Common myeloid progenitor, CD34-positive (primary cell): ENCODE measurements at regions of chr4 and their contacts with region 1.

Region 1: DNA sequence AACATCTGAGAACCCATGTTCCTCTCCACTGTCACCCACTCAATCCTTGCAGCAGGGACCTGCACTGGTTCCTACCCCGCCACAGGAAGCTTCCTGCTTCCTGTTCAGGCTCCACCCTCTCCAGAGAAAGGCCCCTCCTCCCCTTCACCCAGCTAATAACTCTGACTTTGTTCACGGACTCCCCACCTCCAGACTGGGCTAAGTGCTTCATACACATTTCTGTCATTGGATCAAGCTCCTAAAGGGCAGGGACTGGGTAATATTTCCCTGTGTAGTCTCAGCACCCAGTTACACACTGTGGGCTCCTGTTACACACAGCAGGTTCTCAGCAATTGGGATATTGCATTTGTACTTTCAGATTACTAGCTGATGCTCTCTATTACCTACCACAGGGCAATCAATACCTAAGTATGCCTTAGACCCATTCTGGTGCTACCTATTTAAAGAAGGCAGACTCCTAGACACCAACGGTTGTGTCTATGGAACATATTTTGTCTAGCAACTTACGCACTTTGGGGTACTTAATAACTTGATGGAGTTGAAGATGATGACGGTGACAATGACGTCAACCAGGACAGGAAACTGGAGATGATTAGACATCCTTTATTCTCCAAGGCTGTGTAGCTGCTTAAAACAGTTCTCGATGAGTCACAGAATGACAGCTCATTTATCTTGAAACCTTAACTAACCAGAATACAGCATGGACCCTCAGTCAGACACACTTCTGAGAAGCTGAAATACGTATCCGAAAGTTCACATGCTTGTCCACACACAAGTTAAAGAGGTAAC is 58.1 kb downstream of the MAML3 start:
- DNase-seq: peak; percentile 95 to 97 (median 96)
- H3K4me3 ChIP-seq: peak overlapping the region in 5 of 7 experiments; percentile 17 to 63 (median 52)
- H3K27ac ChIP-seq: peak overlapping the region; percentile 91 to 93
- H3K4me1 ChIP-seq: peaks cover 71 to 99% (median 96%) of the 10 kb centered on the region in 4 experiments
- H3K27me3 ChIP-seq: no peaks in the 10 kb centered on the region

Region 2: DNA sequence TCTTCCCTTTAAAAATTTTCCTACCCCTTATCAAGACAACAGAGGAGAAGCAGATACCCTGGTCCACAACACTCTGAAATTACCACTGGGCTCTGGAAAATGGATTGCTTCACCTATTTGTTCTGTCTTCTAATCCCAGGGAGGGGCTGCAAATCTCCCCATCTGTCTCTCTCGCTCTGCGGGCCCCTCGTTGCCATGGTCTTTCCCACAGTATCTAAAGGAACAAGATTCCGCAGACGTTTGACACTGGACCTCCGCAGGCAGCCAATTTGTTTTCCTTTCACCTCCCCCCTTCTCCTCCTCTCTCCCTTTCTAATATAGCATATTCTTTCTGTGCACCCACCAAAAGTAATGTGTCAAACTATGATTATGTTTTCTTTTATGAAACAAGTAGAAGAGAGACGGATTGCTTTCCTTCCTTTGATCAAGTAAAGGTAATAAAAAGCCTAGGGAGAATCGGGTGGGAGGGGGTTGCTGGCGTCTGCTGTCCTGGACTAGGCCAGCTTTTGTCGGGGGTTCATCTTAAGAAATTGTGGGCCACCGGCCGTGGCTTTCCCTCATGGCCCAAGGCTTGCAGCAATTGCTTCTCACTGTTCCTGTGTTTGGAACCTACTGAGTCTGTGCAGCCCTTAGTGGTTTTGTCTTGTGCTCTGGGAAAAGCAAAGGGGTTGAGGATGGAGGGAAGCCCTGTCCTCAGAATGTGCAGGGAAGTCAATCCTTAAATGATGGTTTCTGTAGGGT is 349.3 kb before region 1 on chr4:
- CTCF ChIA-PET with region 1: no interaction called
- POLR2A ChIA-PET with region 1: no interaction called
- DNase-seq: no peak
- H3K4me3 ChIP-seq: no peak overlapping the region
- H3K27ac ChIP-seq: no peak overlapping the region
- H3K4me1 ChIP-seq: peaks cover 7 to 38% (median 24%) of the 10 kb centered on the region in 4 experiments
- H3K27me3 ChIP-seq: no peaks in the 10 kb centered on the region

Region 3: GRCh38 chr4:140056015-140056414 is 39.9 kb before region 1 on chr4:
- CTCF ChIA-PET with region 1: interaction called, 33 read pairs
- POLR2A ChIA-PET with region 1: no interaction called
- DNase-seq: no peak
- H3K4me3 ChIP-seq: no peak overlapping the region
- H3K27ac ChIP-seq: no peak overlapping the region
- H3K4me1 ChIP-seq: peaks cover 29 to 81% (median 58%) of the 10 kb centered on the region in 4 experiments
- H3K27me3 ChIP-seq: no peaks in the 10 kb centered on the region

Region 4: DNA sequence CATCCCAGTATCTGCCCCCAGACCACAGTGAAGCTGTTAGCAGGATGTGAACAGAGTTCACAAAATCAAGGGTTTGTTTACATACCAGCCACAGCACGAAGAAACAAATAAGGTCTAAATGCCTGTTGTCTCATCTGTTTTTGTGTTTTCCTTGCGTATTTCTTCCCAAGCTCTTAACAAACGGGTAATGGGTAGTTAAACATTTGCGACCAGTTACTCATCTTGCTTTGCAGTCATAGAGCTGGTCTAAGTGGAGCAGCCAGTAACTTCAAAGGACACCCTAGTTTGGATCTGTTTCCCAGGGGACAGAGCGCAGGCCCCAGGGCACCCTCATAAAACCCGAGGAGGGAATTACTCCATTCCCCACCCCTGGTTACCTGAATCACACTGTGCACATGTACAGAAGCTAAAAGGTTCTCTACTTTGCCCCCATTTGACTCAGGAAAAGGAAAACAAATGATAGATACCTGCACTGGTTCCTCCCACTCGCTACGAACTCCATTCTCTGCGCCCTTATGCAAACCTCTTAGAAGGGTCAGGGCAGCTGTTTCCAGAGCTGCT is 10.7 kb before region 1 on chr4:
- CTCF ChIA-PET with region 1: interaction called, 10 read pairs
- POLR2A ChIA-PET with region 1: interaction called, 3 read pairs
- DNase-seq: no peak
- H3K4me3 ChIP-seq: no peak overlapping the region
- H3K27ac ChIP-seq: no peak overlapping the region
- H3K4me1 ChIP-seq: peaks cover 6 to 41% (median 32%) of the 10 kb centered on the region in 4 experiments
- H3K27me3 ChIP-seq: no peaks in the 10 kb centered on the region

Region 5: GRCh38 chr4:140135529-140136088 is 39.7 kb after region 1 on chr4:
- CTCF ChIA-PET with region 1: no interaction called
- POLR2A ChIA-PET with region 1: no interaction called
- DNase-seq: no peak
- H3K4me3 ChIP-seq: no peak overlapping the region
- H3K27ac ChIP-seq: no peak overlapping the region
- H3K4me1 ChIP-seq: peaks cover 4 to 41% (median 16%) of the 10 kb centered on the region in 4 experiments
- H3K27me3 ChIP-seq: no peaks in the 10 kb centered on the region

Region 6: GRCh38 chr4:140153718-140154571 is 58.1 kb after region 1 on chr4 and contains the start of gene MAML3:
- CTCF ChIA-PET with region 1: interaction called, 22 read pairs
- POLR2A ChIA-PET with region 1: interaction called, 38 read pairs
- DNase-seq: peak; percentile 96 to 98 (median 96)
- H3K4me3 ChIP-seq: peak within 1 kb of the TSS; percentile 63 to 100 (median 98)
- H3K27ac ChIP-seq: peak within 1 kb of the TSS; percentile 81 to 91
- H3K4me1 ChIP-seq: peaks cover 28 to 61% (median 54%) of the 10 kb centered on the region in 4 experiments
- H3K27me3 ChIP-seq: no peaks in the 10 kb centered on the region

Region 7: DNA sequence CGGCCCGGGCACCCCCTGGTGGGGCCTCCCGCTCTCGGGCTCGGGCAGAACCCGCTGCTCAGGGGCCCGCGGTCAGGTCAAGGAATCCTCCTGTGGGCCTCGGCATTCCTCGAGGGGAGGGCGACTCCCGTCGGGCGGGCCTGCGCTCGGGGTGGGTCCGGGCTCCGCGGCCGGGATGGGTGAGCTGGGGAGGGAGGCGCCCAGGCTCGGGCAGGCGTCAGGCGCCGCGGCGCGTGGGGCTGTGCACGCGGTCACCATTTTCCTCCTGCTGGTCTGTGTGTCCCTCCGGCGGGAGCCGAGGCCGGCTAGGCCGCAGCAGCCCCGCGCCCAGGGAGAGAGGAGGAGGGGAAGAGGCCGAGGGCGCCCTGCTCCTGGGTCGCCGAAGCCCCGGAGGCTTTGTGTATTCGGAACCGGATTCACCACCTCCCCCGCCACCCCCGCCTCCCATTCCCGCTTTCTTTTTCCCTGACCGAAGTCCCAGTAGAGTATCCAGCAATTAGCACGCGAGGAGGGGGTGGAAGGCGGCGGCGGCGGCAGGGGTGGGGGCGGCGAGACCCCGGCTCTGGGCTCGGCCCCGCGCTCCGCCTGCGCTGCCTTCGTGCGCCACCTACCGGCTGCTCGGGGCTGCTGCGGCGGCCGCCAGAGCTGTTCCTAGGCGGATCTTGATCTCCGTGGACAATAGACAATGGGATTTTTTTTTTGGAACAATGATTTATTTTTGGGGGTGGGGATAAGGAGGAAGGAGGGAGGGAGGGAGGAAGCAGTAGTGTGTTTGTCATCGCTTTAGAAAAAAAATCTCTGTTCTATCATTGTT is 157.1 kb after region 1 on chr4:
- CTCF ChIA-PET with region 1: interaction called, 17 read pairs
- POLR2A ChIA-PET with region 1: interaction called, 3 read pairs
- DNase-seq: peak; percentile 63 to 77 (median 76)
- H3K4me3 ChIP-seq: peak overlapping the region; percentile 41 to 80 (median 68)
- H3K27ac ChIP-seq: peak overlapping the region; percentile 27 to 74
- H3K4me1 ChIP-seq: peaks cover 8 to 35% (median 22%) of the 10 kb centered on the region in 4 experiments
- H3K27me3 ChIP-seq: no peaks in the 10 kb centered on the region